Ascending aorta (tissue), 2 donors: ENCODE measurements at regions of chr15 and their contacts with region 1.

Region 1: DNA sequence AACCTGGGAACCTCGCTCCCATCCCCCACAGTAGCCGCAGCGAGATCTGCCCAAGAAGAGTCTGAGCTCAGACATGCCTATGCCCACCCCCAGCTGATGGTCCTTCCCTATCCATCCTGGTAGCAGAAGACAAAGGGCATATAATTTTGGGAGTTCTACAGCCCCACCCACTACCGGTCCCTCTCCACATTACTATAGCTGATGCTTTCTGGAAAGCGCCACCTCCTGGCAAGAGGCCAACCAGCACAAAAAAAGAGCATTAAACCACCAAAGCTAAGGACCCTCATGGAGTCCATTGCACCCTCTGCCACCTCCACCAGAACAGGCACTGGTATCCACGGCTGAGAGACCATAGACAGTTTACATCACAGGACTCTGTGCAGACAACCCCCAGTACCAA is 168.4 kb downstream of the MEGF11 start:
- DNase-seq: no peak
- H3K4me3 ChIP-seq: no peak overlapping the region
- H3K27ac ChIP-seq: no peak overlapping the region
- H3K4me1 ChIP-seq: peaks cover 0 to 7% of the 10 kb centered on the region in 2 donors
- H3K27me3 ChIP-seq: no peaks in the 10 kb centered on the region
- CTCF ChIP-seq: no peak

Region 2: DNA sequence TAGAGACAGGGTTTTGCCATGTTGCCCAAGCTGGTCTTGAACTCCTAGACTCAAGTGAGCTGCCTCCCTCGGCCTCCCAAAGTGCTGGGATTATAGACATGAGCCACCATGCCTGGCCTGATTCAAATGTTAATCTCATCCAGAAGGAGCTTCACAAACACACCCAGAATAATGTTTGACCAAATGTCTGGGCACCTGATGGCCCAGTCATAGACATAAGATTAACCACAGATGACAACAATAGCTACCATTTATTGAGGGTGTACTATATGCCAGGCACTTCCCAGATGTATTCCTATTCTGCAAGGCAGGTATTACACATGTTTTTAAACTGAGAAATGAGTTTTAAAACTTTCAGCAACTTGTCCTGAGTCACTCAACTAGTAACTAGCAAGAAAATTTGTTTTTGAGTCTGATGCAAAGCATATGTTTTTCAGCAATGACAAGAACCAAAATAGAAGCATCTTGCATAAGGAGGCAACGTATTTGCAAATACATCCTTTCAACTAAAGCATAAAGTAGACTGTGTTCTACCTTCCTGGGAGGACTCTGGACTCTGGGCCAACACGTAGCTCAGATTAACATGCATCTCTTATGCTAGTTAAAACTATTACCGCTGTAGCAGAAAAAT is 1087.3 kb before region 1 on chr15:
- intact Hi-C with region 1: no loop called
- DNase-seq: no peak
- H3K4me3 ChIP-seq: no peak overlapping the region
- H3K27ac ChIP-seq: no peak overlapping the region
- H3K4me1 ChIP-seq: no peaks in the 10 kb centered on the region
- H3K27me3 ChIP-seq: no peaks in the 10 kb centered on the region
- CTCF ChIP-seq: no peak

Region 3: DNA sequence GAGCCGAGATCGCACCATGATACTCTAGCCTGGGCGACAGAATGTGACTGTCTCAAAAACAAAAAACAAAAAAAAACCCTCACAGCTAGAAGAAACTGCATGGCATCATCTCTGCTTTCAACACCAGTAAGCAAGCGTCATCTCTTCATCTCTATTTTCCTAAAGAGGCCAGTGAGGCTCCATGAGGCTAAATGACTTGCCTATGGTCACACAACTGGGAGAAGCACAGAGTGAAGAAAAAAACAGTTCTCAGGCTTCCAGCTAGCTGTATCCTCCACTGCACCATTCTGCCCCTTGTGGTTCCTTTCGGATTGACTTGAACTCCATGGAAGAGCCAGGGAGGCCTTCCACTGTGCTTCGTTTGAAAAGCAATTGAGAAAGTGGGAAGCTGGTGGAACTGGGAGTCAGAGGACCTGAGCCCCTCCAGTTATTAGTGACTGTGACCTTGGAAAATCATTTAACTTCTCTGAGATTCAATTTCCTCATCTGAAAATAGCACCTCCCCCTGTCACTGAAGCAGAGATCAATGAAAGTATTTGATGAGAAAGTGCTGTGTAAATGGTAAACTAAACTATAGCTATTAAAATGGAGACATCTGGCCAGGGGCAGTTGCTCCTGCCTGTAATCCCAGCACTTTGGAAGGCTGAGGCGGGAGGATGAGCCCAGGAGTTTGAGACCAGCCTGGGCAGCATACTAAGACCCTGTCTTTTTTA is 260.9 kb before region 1 on chr15:
- intact Hi-C with region 1: loop called (anchors 5 kb)
- DNase-seq: peak in 1 of 2 donors; percentile 71
- H3K4me3 ChIP-seq: no peak overlapping the region
- H3K27ac ChIP-seq: no peak overlapping the region
- H3K4me1 ChIP-seq: peaks cover 0 to 5% of the 10 kb centered on the region in 2 donors
- H3K27me3 ChIP-seq: no peaks in the 10 kb centered on the region
- CTCF ChIP-seq: peak; percentile 28 to 69 (median 49)